ENCODE measurements at regions of chr10 and their contacts with region 1.

Region 1: GRCh38 chr10:68647672-68648341 is 73.2 kb upstream of the CCAR1 start:
- DNase-seq: no peak
- H3K4me3 Mint-ChIP-seq: no peak overlapping the region
- H3K27ac Mint-ChIP-seq: peak overlapping the region; percentile 56
- H3K4me1 Mint-ChIP-seq: peaks cover 32% of the 10 kb centered on the region
- H3K27me3 Mint-ChIP-seq: no peaks in the 10 kb centered on the region
- CTCF ChIP-seq: no peak

Region 2: GRCh38 chr10:68697106-68697505 is 49.3 kb after region 1 on chr10:
- CTCF ChIA-PET with region 1: interaction called, 10 read pairs
- intact Hi-C with region 1: no loop called
- DNase-seq: no peak
- H3K4me3 Mint-ChIP-seq: no peak overlapping the region
- H3K27ac Mint-ChIP-seq: no peak overlapping the region
- H3K4me1 Mint-ChIP-seq: no peaks in the 10 kb centered on the region
- H3K27me3 Mint-ChIP-seq: no peaks in the 10 kb centered on the region
- CTCF ChIP-seq: no peak

Measured in Calu3 (cell line).